ENCODE measurements at regions of chr11 and their contacts with region 1.

Region 1: GRCh38 chr11:73393479-73394380 is 17.5 kb downstream of the RELT start:
- DNase-seq: peak; percentile 94
- H3K4me3 ChIP-seq: no peak overlapping the region; a peak in 1 of 4 replicates
- H3K27ac ChIP-seq: no peak overlapping the region
- H3K4me1 ChIP-seq: no peaks in the 10 kb centered on the region; a peak in 1 of 4 replicates
- H3K27me3 ChIP-seq: no peaks in the 10 kb centered on the region
- CTCF ChIP-seq: peak; percentile 81
- EP300 ChIP-seq: no peak
- RAD21 ChIP-seq: peak; percentile 92

Region 2: GRCh38 chr11:73360336-73361013 is 33.3 kb before region 1 on chr11:
- CTCF ChIA-PET with region 1: interaction called, 144 read pairs
- POLR2A ChIA-PET with region 1: no interaction called
- DNase-seq: peak; percentile 78
- H3K4me3 ChIP-seq: no peak overlapping the region; a peak in 1 of 4 replicates
- H3K27ac ChIP-seq: no peak overlapping the region
- H3K4me1 ChIP-seq: peaks cover 0 to 8% of the 10 kb centered on the region in 2 experiments; a peak in 1 of 4 replicates
- H3K27me3 ChIP-seq: no peaks in the 10 kb centered on the region
- CTCF ChIP-seq: peak; percentile 54
- EP300 ChIP-seq: no peak
- RAD21 ChIP-seq: peak; percentile 57

Region 3: GRCh38 chr11:73376160-73376802 is 17.4 kb before region 1 on chr11 and contains the start of gene RELT:
- CTCF ChIA-PET with region 1: interaction called, 16 read pairs
- POLR2A ChIA-PET with region 1: no interaction called
- DNase-seq: peak; percentile 99
- H3K4me3 ChIP-seq: peak within 1 kb of the TSS; percentile 67 to 87
- H3K27ac ChIP-seq: peak within 1 kb of the TSS; percentile 64 to 71
- H3K4me1 ChIP-seq: peaks cover 3 to 19% of the 10 kb centered on the region in 2 experiments; a peak in 1 of 4 replicates
- H3K27me3 ChIP-seq: no peaks in the 10 kb centered on the region
- CTCF ChIP-seq: peak; percentile 73
- EP300 ChIP-seq: no peak
- RAD21 ChIP-seq: peak; percentile 53
- polyA plus RNA-seq, gene RELT: 4.3 and 5.5 TPM in 2 replicates

Region 4: DNA sequence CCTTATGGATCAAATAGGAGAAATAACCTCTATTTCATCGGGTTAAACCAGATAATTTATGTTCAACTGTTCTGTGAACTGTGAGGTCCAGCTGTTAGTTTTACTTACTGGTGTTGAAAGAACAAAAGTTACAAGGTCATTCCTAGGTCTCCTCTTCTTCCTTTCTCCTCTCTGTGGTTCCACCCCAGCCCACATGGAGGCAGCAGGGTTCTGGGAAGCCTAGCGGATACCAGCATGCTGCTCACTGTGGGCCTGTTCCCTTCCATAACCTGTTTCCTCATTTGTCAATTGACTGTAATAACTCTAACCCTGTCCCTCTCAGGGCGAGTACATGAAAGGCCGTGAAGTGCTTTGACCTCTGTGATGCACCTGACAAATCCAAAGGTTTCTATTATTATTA is 10.3 kb after region 1 on chr11:
- CTCF ChIA-PET with region 1: interaction called, 40 read pairs
- POLR2A ChIA-PET with region 1: no interaction called
- DNase-seq: peak; percentile 84
- H3K4me3 ChIP-seq: no peak overlapping the region
- H3K27ac ChIP-seq: no peak overlapping the region
- H3K4me1 ChIP-seq: no peaks in the 10 kb centered on the region
- H3K27me3 ChIP-seq: no peaks in the 10 kb centered on the region
- CTCF ChIP-seq: peak; percentile 81
- EP300 ChIP-seq: no peak
- RAD21 ChIP-seq: peak; percentile 94

Region 5: GRCh38 chr11:73425108-73425507 is 31.4 kb after region 1 on chr11:
- CTCF ChIA-PET with region 1: interaction called, 12 read pairs
- POLR2A ChIA-PET with region 1: no interaction called
- DNase-seq: no peak
- H3K4me3 ChIP-seq: no peak overlapping the region
- H3K27ac ChIP-seq: no peak overlapping the region; a peak in 1 of 4 replicates
- H3K4me1 ChIP-seq: peaks cover 20% of the 10 kb centered on the region in 2 experiments
- H3K27me3 ChIP-seq: no peaks in the 10 kb centered on the region
- CTCF ChIP-seq: no peak
- EP300 ChIP-seq: no peak
- RAD21 ChIP-seq: no peak

Region 6: GRCh38 chr11:73693899-73694525 is 300.3 kb after region 1 on chr11:
- CTCF ChIA-PET with region 1: no interaction called
- POLR2A ChIA-PET with region 1: no interaction called
- DNase-seq: no peak
- H3K4me3 ChIP-seq: no peak overlapping the region
- H3K27ac ChIP-seq: no peak overlapping the region
- H3K4me1 ChIP-seq: no peaks in the 10 kb centered on the region
- H3K27me3 ChIP-seq: no peaks in the 10 kb centered on the region
- CTCF ChIP-seq: no peak
- EP300 ChIP-seq: no peak
- RAD21 ChIP-seq: no peak